CD8-positive, alpha-beta memory T cell (primary cell): ENCODE measurements at regions of chr5 and their contacts with region 1.

Region 1: GRCh38 chr5:176388444-176389134 is at the starts of genes HIGD2A and NOP16:
- DNase-seq: peak; percentile 98 to 100 (median 98)
- H3K4me3 ChIP-seq: peak within 1 kb of the TSS; percentile 99
- H3K4me3 Mint-ChIP-seq: peak within 1 kb of the TSS; percentile 96 to 100 (median 99)
- H3K27ac ChIP-seq: peak within 1 kb of the TSS; percentile 93
- H3K27ac Mint-ChIP-seq: peak within 1 kb of the TSS; percentile 97 to 100 (median 99)
- H3K4me1 ChIP-seq: peaks cover 24% of the 10 kb centered on the region
- H3K4me1 Mint-ChIP-seq: peaks cover 27 to 34% (median 34%) of the 10 kb centered on the region in 3 donors
- H3K27me3 ChIP-seq: no peaks in the 10 kb centered on the region
- H3K27me3 Mint-ChIP-seq: no peaks in the 10 kb centered on the region
- total RNA-seq, gene HIGD2A: 98.3 to 101 TPM
- total RNA-seq, gene NOP16: 157 to 160 TPM

Region 2: DNA sequence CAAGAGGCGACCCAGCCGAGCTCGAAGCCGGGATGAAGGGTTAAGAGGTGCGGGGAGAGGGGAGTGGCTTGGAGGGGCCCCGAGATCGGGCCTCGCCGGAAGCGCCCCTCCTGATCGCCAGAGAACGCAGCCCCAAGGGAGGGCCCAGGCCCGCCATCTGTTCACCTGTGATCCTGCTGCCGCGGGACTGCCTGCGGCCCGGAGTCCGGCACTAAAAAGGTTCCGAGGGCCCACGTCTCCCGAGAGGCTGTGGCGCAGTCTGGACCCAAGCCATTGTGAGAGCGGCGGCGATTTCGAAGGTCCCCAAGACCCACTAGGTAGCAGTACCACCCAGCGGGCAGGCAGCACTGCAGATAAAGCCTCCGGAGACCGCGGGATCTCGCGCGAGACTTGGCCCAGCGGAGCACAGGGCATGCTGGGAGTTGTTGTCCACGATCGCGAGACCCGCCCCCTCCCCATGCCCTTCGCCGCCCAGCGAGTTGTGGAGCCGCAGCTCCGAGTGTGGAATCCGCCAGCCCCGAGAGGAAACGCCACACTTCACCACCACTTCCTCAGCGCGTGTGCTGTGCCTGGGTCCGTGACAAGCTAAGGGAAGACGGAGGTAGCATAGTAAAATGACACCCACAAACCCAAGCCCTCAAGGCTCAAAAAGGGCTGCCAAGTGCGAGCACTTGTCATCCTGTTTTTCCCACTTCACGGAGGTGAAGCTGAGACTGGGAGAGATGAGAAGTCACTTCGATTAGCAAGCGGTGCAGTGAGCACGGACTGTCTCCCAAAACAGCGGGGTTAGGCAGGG is 27.0 kb before region 1 on chr5 and contains the start of gene KIAA1191:
- CTCF ChIA-PET with region 1: interaction called, 7 read pairs
- POLR2A ChIA-PET with region 1: interaction called, 40 read pairs
- DNase-seq: peak; percentile 91 to 98 (median 94)
- H3K4me3 ChIP-seq: peak within 1 kb of the TSS; percentile 82
- H3K4me3 Mint-ChIP-seq: peak within 1 kb of the TSS; percentile 96 to 100 (median 99)
- H3K27ac ChIP-seq: peak within 1 kb of the TSS; percentile 80
- H3K27ac Mint-ChIP-seq: peak within 1 kb of the TSS; percentile 92 to 98 (median 97)
- H3K4me1 ChIP-seq: peaks cover 25% of the 10 kb centered on the region
- H3K4me1 Mint-ChIP-seq: peaks cover 32 to 57% (median 40%) of the 10 kb centered on the region in 3 donors
- H3K27me3 ChIP-seq: no peaks in the 10 kb centered on the region
- H3K27me3 Mint-ChIP-seq: no peaks in the 10 kb centered on the region
- total RNA-seq, gene KIAA1191: 35.6 to 37.0 TPM

Region 3: GRCh38 chr5:176427971-176428370 is 39.4 kb after region 1 on chr5:
- CTCF ChIA-PET with region 1: no interaction called
- POLR2A ChIA-PET with region 1: no interaction called
- DNase-seq: no peak
- H3K4me3 ChIP-seq: no peak overlapping the region
- H3K4me3 Mint-ChIP-seq: no peak overlapping the region
- H3K27ac ChIP-seq: no peak overlapping the region
- H3K27ac Mint-ChIP-seq: no peak overlapping the region
- H3K4me1 ChIP-seq: no peaks in the 10 kb centered on the region
- H3K4me1 Mint-ChIP-seq: peaks cover 0 to 9% (median 6%) of the 10 kb centered on the region in 3 donors
- H3K27me3 ChIP-seq: no peaks in the 10 kb centered on the region
- H3K27me3 Mint-ChIP-seq: peaks cover 5 to 10% of the 10 kb centered on the region in 2 donors

Region 4: GRCh38 chr5:176481711-176482110 is 93.1 kb after region 1 on chr5:
- CTCF ChIA-PET with region 1: no interaction called
- POLR2A ChIA-PET with region 1: no interaction called
- DNase-seq: no peak
- H3K4me3 ChIP-seq: no peak overlapping the region
- H3K4me3 Mint-ChIP-seq: no peak overlapping the region
- H3K27ac ChIP-seq: no peak overlapping the region
- H3K27ac Mint-ChIP-seq: peak overlapping the region in 1 of 8 donors; percentile 29
- H3K4me1 ChIP-seq: no peaks in the 10 kb centered on the region
- H3K4me1 Mint-ChIP-seq: peaks cover 20 to 51% (median 37%) of the 10 kb centered on the region in 3 donors
- H3K27me3 ChIP-seq: no peaks in the 10 kb centered on the region
- H3K27me3 Mint-ChIP-seq: no peaks in the 10 kb centered on the region

Region 5: DNA sequence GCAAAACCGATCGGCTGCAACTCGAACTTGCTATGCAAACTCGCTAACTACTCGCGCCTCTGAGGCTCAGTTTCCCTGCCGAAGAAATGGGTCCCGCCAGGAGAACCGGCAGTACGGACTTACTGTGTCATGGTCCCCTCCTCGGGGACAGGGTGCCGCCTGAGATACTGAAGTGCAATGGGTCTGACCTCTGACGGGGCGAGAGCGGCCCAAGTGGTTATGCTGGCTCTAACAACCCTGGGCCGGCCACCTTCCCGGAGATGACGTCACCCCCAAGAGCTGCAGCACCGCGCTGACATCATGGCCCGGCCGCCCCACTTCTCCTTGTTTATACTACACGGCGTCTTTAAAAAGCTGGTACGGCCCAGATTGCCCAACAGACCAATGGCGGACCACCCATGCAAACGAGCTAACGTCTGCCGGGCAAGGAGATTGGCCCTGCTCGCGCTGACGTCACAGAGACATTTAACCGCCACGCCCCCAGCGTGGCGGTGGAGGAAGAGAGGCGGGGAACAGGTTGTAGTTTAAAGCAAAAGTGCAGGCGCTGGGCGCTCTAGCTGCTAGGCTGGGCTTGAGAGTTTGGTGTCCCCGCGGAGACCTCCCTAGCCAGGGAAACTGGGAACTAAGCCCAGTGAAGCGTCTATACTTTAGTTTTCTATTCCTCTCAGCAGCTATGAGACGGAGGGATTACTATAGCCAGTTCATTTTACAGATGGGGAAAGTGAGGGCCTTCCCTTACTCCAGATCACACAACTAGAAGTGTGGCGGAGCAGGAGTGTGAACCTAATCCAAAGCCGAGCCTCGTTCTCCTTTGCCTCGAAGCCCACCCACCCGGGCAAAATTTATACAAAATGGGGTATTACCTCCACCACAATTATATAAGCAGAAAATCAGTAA is 149.3 kb after region 1 on chr5:
- CTCF ChIA-PET with region 1: no interaction called
- POLR2A ChIA-PET with region 1: interaction called, 16 read pairs
- DNase-seq: peak; percentile 96 to 99 (median 97)
- H3K4me3 ChIP-seq: peak overlapping the region; percentile 99
- H3K4me3 Mint-ChIP-seq: peak overlapping the region; percentile 98 to 100 (median 99)
- H3K27ac ChIP-seq: peak overlapping the region; percentile 100
- H3K27ac Mint-ChIP-seq: peak overlapping the region; percentile 98 to 100 (median 99)
- H3K4me1 ChIP-seq: peaks cover 74% of the 10 kb centered on the region
- H3K4me1 Mint-ChIP-seq: peaks cover 72 to 77% (median 76%) of the 10 kb centered on the region in 3 donors
- H3K27me3 ChIP-seq: no peaks in the 10 kb centered on the region
- H3K27me3 Mint-ChIP-seq: peaks cover 0 to 9% of the 10 kb centered on the region in 2 donors